ENCODE measurements at regions of chr1 and their contacts with region 1.

Region 1: DNA sequence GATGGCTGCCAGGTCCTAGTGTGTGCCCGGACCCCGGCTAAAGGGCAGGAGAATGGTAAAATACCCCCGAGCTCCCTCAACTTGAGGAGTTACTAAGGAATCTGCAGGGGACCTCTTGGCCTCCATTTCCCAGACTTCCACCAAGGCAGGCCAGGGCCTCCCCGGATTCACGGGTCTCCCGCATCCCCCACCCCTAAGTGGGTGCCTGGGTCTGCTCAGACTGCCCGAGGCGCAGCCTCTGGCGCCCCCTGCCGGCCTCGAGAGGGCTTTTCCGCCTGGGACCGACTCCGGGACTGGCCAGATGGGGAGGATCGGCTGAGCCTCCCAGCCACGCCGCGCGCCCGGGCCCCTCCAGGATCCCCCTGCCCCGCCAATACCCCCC is 1.7 kb downstream of the PLEKHG5 start:
- DNase-seq: peak; percentile 85
- H3K4me3 Mint-ChIP-seq: peak overlapping the region; percentile 74
- H3K27ac Mint-ChIP-seq: peak overlapping the region; percentile 82
- H3K4me1 Mint-ChIP-seq: peaks cover 35% of the 10 kb centered on the region
- H3K27me3 Mint-ChIP-seq: peaks cover 32% of the 10 kb centered on the region

Region 2: DNA sequence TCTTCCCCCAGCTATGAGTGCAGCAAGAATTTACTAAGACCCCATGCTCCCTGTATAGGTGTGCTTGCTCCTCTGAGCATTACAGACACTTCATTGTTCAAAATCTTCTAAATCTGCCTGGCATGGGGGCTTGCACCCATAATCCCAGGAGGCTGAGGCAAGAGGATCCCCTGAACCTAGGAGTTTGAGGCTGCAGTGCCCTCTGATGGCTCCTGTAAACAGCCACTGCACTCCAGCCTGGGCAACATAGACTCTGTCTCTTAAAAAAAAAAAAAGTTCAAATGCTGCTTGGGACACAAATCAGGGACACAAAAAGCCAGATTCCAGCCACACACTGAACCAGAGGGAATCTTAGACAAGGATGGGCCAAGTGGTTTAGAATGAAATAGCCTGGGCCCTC is 92.8 kb before region 1 on chr1:
- CTCF ChIA-PET with region 1: no interaction called
- DNase-seq: peak; percentile 35
- H3K4me3 Mint-ChIP-seq: no peak overlapping the region
- H3K27ac Mint-ChIP-seq: peak overlapping the region; percentile 17
- H3K4me1 Mint-ChIP-seq: peaks cover 33% of the 10 kb centered on the region
- H3K27me3 Mint-ChIP-seq: peaks cover 23% of the 10 kb centered on the region

Region 3: GRCh38 chr1:6423321-6423999 is 66.3 kb before region 1 on chr1:
- CTCF ChIA-PET with region 1: interaction called, 18 read pairs
- DNase-seq: peak; percentile 81
- H3K4me3 Mint-ChIP-seq: no peak overlapping the region
- H3K27ac Mint-ChIP-seq: no peak overlapping the region
- H3K4me1 Mint-ChIP-seq: peaks cover 24% of the 10 kb centered on the region
- H3K27me3 Mint-ChIP-seq: peaks cover 97% of the 10 kb centered on the region

Region 4: DNA sequence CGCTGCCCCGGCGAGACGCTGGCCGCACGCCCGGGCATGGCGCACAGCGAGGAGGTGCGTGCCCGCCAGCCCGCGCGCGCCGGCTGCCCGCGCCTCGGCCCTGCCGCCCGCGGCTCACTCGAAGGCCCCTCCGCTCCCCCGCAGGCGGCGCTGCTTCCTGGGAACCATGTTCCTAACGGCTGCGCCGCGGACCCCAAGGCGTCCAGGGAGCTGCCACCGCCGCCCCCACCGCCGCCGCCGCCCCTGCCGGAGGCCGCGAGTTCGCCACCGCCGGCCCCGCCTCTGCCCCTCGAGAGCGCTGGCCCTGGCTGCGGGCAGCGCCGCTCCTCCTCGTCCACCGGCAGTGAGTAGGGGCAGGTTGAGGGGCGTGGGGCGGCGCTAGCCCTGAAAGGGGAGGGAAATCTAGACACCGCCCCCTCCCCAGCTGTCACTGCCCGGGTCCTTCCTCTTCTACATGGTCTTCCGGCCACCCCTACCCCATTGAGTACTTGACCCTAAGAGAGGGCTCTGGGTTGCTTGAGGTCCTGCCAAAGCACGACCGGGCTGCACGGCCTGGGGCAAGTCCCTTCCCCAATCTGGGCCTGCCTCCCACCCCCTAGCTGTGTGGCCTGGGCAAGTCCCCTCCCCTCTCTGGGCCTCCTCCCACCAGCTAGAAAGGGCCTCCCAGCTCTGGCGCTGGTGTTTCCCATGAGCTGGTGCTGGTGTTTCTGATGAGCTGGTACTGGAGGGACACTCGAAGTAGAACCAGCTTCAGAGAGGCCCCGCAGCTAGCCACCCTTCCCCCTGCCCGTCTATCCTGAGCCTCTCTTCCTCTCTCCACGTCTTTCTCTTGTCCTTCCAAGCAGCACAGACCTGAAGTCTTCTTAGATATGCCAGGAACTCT is 40.8 kb before region 1 on chr1:
- CTCF ChIA-PET with region 1: interaction called, 13 read pairs
- DNase-seq: peak; percentile 47
- H3K4me3 Mint-ChIP-seq: peak overlapping the region; percentile 33
- H3K27ac Mint-ChIP-seq: no peak overlapping the region
- H3K4me1 Mint-ChIP-seq: peaks cover 28% of the 10 kb centered on the region
- H3K27me3 Mint-ChIP-seq: peaks cover 99% of the 10 kb centered on the region

Region 5: GRCh38 chr1:6538956-6539355 is 49.2 kb after region 1 on chr1:
- CTCF ChIA-PET with region 1: no interaction called
- DNase-seq: no peak
- H3K4me3 Mint-ChIP-seq: no peak overlapping the region
- H3K27ac Mint-ChIP-seq: no peak overlapping the region
- H3K4me1 Mint-ChIP-seq: peaks cover 2% of the 10 kb centered on the region
- H3K27me3 Mint-ChIP-seq: no peaks in the 10 kb centered on the region

Region 6: DNA sequence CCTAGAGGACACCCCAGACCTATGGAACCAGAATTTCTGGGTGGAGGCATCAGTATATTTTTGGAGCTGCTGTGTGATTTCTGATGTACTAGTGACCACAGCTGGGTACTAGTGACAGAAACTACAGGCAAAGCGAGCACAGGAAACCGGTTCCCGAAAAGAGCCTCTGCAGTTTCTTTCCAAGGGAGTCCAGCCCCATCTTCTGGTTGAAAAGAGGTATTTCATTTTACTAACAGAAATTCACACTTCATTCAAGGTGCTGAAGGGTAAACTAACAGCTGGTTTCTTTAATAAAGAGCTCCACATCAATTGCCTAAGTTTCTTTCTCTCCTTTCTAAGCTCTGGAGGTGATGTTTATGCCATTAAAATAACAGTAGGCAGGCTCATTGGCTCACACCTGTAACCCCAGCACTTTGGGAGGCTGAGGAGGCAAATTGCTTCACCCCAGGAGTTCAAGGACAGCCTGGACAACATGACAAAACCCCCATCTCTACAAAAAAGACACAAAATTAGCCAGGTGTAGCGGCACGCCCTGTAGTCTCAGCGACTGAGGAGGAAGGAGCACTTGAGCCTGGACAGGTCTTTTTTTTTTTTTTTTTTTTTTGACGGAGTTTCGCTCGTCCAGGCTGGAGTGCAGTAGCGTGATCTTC is 156.8 kb after region 1 on chr1:
- CTCF ChIA-PET with region 1: interaction called, 43 read pairs
- DNase-seq: peak; percentile 55
- H3K4me3 Mint-ChIP-seq: no peak overlapping the region
- H3K27ac Mint-ChIP-seq: no peak overlapping the region
- H3K4me1 Mint-ChIP-seq: peaks cover 4% of the 10 kb centered on the region
- H3K27me3 Mint-ChIP-seq: no peaks in the 10 kb centered on the region

Measured in activated naive CD4-positive, alpha-beta T cell treated with anti-CD3 and anti-CD28 coated beads, Interleukin-2, amount 10 ng/mL, durations not matched to agents 7 days and 5 days (primary cell).